ENCODE measurements at regions of chr16 and their contacts with region 1.

Region 1: GRCh38 chr16:19886073-19886941 is 1.7 kb upstream of the GPRC5B start:
- DNase-seq: peak in 1 of 2 donors; percentile 56
- ATAC-seq: peak; percentile 8 to 28
- H3K4me3 ChIP-seq: peak overlapping the region; percentile 80 to 93 (median 82)
- H3K27ac ChIP-seq: peak overlapping the region in 1 of 4 donors; percentile 99
- H3K4me1 ChIP-seq: peaks cover 22 to 28% of the 10 kb centered on the region in 2 donors
- H3K27me3 ChIP-seq: no peaks in the 10 kb centered on the region
- CTCF ChIP-seq: peak in 4 of 5 experiments; percentile 99 to 100 (median 100)
- POLR2A ChIP-seq: no peak

Region 2: DNA sequence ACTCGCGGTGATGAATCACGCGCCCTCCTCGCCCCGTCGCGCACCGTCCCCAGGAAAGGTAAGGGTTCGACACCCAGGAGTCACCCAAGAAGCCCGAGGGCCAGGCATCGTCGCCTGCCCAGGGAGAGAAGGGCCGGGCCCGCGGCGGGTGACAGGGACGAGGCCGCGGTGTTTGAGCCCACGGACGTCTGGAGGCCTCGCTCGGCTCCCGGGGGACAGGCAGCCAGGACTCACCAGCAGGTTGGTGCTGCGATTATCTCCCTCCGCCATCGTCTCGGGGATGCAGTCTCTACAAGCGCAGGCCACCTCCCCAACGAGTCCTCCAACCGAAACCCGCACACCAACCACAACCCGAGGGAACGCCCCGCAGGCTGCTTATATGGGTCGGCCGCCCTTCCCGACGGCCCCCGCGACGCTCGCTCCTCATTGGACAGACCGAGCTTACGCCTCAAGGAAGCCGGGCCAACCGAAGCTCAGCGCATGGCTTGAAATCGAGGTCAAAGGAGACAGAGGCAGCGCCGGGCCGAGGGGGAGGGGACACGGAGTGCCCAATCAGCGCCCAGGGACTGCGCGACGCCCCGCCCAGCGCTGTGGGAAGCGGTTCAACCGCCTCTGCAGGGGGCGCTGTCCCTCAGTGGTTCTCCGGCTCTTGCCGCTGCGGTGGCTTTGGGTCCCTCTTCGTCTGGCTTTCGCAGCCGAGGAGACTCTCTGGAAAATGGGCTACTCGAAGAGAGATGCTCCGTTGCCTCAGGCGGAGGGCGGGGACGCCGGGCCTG is 1084.9 kb before region 1 on chr16 and contains the start of gene ARL6IP1:
- in situ Hi-C with region 1: no loop called
- intact Hi-C with region 1: loop called (anchors 10 kb)
- DNase-seq: peak; percentile 99 to 100
- ATAC-seq: peak; percentile 93
- H3K4me3 ChIP-seq: peak within 1 kb of the TSS; percentile 91 to 96 (median 94)
- H3K27ac ChIP-seq: peak within 1 kb of the TSS; percentile 90 to 96 (median 94)
- H3K4me1 ChIP-seq: peaks cover 53 to 64% of the 10 kb centered on the region in 2 donors
- H3K27me3 ChIP-seq: no peaks in the 10 kb centered on the region
- CTCF ChIP-seq: peak; percentile 90 to 94 (median 92)
- POLR2A ChIP-seq: peak; percentile 99 to 100
- total RNA-seq, gene ARL6IP1: 25.2 to 40.5 (median 37.5) TPM

Region 3: GRCh38 chr16:19555162-19555937 is 331.0 kb before region 1 on chr16 and contains the start of gene VPS35L:
- in situ Hi-C with region 1: no loop called
- intact Hi-C with region 1: loop called (anchors 1 kb)
- DNase-seq: peak; percentile 93 to 98
- ATAC-seq: peak; percentile 95 to 98
- H3K4me3 ChIP-seq: peak within 1 kb of the TSS; percentile 59 to 95 (median 64)
- H3K27ac ChIP-seq: peak within 1 kb of the TSS; percentile 91 to 95 (median 92)
- H3K4me1 ChIP-seq: peaks cover 8 to 17% of the 10 kb centered on the region in 2 donors
- H3K27me3 ChIP-seq: no peaks in the 10 kb centered on the region
- CTCF ChIP-seq: peak; percentile 81 to 86 (median 82)
- POLR2A ChIP-seq: peak; percentile 48 to 49
- total RNA-seq, gene VPS35L: 16.9 to 29.1 (median 24.8) TPM

Region 4: DNA sequence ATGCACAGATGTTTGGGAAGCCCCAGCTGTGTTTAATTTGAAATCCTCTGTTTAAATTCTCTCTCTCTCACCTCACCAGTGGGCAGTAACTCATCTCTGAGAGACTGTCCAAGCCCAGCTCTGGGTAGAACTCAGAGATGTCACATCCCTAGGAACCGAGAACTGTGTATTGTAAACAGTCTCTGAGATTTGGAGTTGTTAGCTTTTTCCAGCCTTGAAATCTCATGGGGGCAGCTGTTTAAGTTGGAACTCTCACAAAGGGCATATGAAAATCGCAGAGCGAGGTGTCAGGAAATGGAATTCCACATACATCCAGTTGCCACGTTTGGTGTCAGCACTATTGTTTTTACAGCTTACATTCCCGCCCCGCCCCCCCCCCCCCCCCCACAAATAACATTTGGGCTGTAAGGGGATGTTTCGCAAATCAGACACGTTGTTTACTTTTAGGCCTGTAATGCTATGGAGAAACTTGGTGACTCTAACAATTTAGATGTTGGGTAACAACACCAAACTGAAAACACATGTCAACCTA is 296.5 kb before region 1 on chr16:
- in situ Hi-C with region 1: loop called in 1 of 4 experiments (anchors 5 kb)
- intact Hi-C with region 1: no loop called
- DNase-seq: no peak
- ATAC-seq: no peak
- H3K4me3 ChIP-seq: no peak overlapping the region
- H3K27ac ChIP-seq: no peak overlapping the region
- H3K4me1 ChIP-seq: no peaks in the 10 kb centered on the region
- H3K27me3 ChIP-seq: no peaks in the 10 kb centered on the region
- CTCF ChIP-seq: no peak
- POLR2A ChIP-seq: no peak

Region 5: DNA sequence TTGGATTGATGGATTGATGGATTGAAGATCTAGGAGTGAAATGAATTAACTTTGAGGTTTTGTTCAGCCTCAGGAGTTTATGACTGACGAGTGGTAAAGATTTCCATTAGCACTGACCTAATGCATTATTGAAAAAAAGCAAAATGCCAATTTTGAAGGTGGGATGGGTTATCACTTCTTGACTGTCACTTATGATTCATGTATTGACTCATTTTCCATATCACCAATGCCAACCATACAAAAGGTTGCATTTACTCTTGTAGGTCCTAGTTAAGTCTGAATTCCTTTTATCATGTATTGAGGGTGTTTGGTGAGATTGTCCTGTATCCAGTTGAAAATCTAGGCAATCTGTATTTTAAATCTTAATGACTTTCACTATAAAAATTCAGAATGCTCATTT is 225.9 kb before region 1 on chr16:
- in situ Hi-C with region 1: no loop called
- intact Hi-C with region 1: loop called (anchors 5 kb)
- DNase-seq: no peak
- ATAC-seq: no peak
- H3K4me3 ChIP-seq: no peak overlapping the region
- H3K27ac ChIP-seq: no peak overlapping the region
- H3K4me1 ChIP-seq: no peaks in the 10 kb centered on the region
- H3K27me3 ChIP-seq: no peaks in the 10 kb centered on the region
- CTCF ChIP-seq: no peak
- POLR2A ChIP-seq: no peak

Region 6: DNA sequence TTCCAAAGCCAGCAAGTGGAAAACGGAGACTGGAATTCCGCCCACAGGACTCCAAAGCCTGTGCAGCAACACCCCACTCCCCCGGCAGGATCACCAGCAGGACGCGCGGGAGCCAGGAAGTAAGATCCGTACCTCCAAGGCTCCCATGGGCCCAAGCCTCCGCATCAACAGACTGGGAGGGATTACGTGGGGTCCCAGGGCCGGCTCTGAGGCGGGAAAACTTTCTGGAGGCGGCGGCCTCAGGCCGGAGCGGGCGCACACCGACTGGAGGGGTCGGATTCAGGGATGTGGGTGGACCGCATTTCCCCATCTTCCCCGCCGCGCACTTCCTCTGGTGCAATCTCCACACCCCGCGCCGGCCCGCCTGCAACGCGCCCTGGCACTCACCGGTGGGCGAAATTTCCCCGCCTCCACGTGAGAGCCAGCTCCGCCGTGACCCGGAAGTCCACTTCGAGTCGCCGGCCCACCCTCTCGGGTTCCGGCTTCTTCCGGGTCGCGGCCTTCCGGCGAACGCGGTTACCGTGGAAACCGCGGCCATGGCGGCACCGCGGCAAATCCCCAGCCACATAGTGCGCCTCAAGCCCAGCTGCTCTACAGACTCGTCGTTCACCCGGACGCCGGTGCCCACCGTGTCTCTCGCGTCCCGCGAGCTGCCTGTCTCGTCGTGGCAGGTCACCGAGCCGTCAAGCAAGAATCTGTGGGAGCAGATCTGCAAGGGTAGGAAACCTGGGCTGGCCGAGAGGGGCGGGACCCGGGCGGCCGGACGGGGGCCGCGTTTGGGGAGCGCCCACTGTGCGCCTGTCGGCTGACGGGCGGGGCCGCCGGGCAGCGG is 168.3 kb before region 1 on chr16 and contains the starts of genes IQCK and KNOP1:
- in situ Hi-C with region 1: no loop called
- intact Hi-C with region 1: loop called (anchors 1 kb)
- DNase-seq: peak; percentile 83 to 87
- ATAC-seq: peak; percentile 89 to 90
- H3K4me3 ChIP-seq: peak within 1 kb of the TSS; percentile 83 to 95 (median 94)
- H3K27ac ChIP-seq: peak within 1 kb of the TSS; percentile 82 to 87 (median 86)
- H3K4me1 ChIP-seq: peaks cover 27% of the 10 kb centered on the region in 2 donors
- H3K27me3 ChIP-seq: no peaks in the 10 kb centered on the region
- CTCF ChIP-seq: peak in 2 of 5 experiments; percentile 26 to 28
- POLR2A ChIP-seq: peak; percentile 53 to 56
- total RNA-seq, gene IQCK: 8.3 to 17.3 (median 9.4) TPM
- total RNA-seq, gene KNOP1: 4.1 to 9.2 (median 5.5) TPM

Region 7: GRCh38 chr16:19831678-19832077 is 54.6 kb before region 1 on chr16:
- in situ Hi-C with region 1: no loop called
- intact Hi-C with region 1: loop called (anchors 5 kb)
- DNase-seq: peak; percentile 71 to 78
- ATAC-seq: peak; percentile 92
- H3K4me3 ChIP-seq: peak overlapping the region in 2 of 4 donors; percentile 24 to 32
- H3K27ac ChIP-seq: peak overlapping the region; percentile 92 to 99 (median 98)
- H3K4me1 ChIP-seq: peaks cover 39 to 41% of the 10 kb centered on the region in 2 donors
- H3K27me3 ChIP-seq: no peaks in the 10 kb centered on the region
- CTCF ChIP-seq: no peak
- POLR2A ChIP-seq: peak; percentile 62 to 84